Naive thymus-derived CD4-positive, alpha-beta T cell (primary cell): ENCODE measurements at regions of chr2 and their contacts with region 1.

Region 1: DNA sequence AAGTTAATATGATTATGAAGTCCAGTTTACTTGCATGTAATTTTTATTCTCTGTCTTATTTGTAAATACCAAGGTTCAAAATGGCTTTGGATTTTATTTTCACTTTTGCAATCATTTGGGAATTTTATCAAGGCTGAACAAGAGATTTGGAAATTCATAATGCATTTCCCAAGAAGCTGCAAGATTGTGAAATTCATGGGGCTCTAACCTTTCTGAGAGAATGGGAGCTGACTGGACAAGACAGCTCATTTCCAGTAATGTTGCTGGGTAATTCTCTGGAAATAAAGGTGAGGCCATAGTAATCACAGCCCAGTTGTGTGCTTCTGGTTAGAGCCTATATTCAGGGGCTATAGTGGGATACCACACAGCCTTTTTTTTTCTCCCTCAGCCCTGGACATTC is 21.5 kb upstream of the NABP1 start:
- DNase-seq: no peak
- ATAC-seq: no peak
- H3K4me3 ChIP-seq: no peak overlapping the region
- H3K4me3 Mint-ChIP-seq: no peak overlapping the region
- H3K27ac ChIP-seq: no peak overlapping the region
- H3K27ac Mint-ChIP-seq: no peak overlapping the region
- H3K4me1 ChIP-seq: no peaks in the 10 kb centered on the region
- H3K4me1 Mint-ChIP-seq: peaks cover 0 to 5% (median 0%) of the 10 kb centered on the region in 7 donors
- H3K27me3 ChIP-seq: no peaks in the 10 kb centered on the region
- H3K27me3 Mint-ChIP-seq: peaks cover 0 to 2% (median 0%) of the 10 kb centered on the region in 5 donors

Region 2: DNA sequence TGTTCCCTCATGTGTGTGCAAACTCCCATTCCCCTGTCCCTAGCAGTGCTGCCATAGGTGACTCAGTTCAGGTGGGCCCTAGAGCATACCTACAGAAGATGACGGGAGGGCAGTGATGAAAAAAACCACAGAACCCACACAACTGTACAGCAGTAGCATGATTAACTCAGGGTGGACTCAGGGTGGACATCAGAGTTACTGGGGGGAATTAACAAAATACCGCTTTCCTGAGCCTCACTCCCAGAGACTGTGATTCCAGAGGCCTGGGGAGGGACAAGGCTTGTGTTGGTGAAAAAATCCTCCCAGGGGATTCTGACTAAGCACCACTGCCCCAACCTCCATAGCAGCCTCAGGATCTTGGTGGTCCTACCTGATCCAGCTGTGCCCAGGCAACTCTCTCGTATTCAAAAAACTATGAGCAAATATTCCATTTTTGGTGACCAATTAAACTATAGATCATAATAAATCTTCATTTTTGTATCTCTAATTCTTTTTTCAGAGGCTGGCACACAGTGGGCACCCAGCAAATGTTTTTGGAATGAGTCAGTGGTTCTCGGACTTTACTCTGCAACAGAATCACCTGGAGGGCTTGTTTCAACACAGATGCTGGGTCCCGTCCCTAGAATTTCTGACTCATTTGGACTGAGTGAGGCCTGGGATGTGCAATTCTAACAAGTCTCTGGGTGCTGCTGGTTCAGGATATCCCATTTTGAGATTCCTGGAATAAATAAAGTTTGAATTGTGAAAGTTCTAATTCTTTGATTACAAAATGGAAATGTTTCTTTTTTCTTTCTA is 62.6 kb before region 1 on chr2:
- CTCF ChIA-PET with region 1: no interaction called
- POLR2A ChIA-PET with region 1: no interaction called
- intact Hi-C with region 1: no loop called
- DNase-seq: no peak
- ATAC-seq: no peak
- H3K4me3 ChIP-seq: no peak overlapping the region
- H3K4me3 Mint-ChIP-seq: no peak overlapping the region
- H3K27ac ChIP-seq: no peak overlapping the region
- H3K27ac Mint-ChIP-seq: no peak overlapping the region
- H3K4me1 ChIP-seq: no peaks in the 10 kb centered on the region
- H3K4me1 Mint-ChIP-seq: no peaks in the 10 kb centered on the region
- H3K27me3 ChIP-seq: no peaks in the 10 kb centered on the region
- H3K27me3 Mint-ChIP-seq: peaks cover 0 to 11% (median 0%) of the 10 kb centered on the region in 5 donors

Region 3: DNA sequence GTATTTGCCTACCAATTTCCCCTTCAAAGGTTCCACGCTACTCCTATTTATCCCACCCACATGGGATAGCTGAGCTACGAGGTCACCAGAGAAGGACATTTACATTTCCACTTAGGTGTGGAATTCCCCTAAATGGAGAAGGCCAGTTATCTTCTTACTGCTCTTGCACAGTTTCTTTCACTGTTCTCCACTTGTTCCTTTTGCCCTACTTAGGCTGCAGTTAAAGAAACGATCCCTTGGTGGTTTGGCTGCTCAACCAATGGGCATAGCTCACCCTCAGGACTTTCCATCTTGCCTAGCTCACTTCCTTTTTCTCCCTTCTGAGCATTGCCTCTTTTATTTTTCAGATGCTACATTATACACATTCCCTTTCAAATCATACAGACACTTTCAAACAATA is 10.3 kb after region 1 on chr2:
- CTCF ChIA-PET with region 1: no interaction called
- POLR2A ChIA-PET with region 1: interaction called, 4 read pairs
- intact Hi-C with region 1: loop called in 1 of 2 experiments (anchors 2 kb)
- DNase-seq: no peak
- ATAC-seq: peak; percentile 63
- H3K4me3 ChIP-seq: no peak overlapping the region
- H3K4me3 Mint-ChIP-seq: peak overlapping the region in 1 of 10 donors; percentile 10
- H3K27ac ChIP-seq: no peak overlapping the region
- H3K27ac Mint-ChIP-seq: no peak overlapping the region
- H3K4me1 ChIP-seq: no peaks in the 10 kb centered on the region
- H3K4me1 Mint-ChIP-seq: peaks cover 0 to 19% (median 3%) of the 10 kb centered on the region in 7 donors
- H3K27me3 ChIP-seq: no peaks in the 10 kb centered on the region
- H3K27me3 Mint-ChIP-seq: no peaks in the 10 kb centered on the region

Region 4: DNA sequence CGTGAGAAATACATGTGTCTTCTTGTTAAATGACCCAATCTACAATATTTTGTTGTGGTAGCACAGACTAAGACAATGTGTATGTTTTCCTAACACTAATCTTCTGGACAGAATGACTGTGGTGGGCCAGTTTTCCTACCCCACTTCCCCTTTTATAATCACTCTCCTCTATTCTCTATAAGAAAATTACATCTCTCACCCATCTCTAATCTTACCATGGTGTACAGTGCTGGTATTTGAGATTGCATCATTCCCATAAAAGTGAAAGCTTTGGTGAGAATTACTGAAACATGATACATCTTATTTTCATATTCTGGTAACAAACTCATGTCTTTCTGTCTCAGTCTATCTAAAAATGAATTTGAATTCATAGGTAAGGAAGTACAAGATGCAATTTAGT is 150.0 kb after region 1 on chr2:
- CTCF ChIA-PET with region 1: no interaction called
- POLR2A ChIA-PET with region 1: no interaction called
- intact Hi-C with region 1: no loop called
- DNase-seq: no peak
- ATAC-seq: no peak
- H3K4me3 ChIP-seq: no peak overlapping the region
- H3K4me3 Mint-ChIP-seq: no peak overlapping the region
- H3K27ac ChIP-seq: no peak overlapping the region
- H3K27ac Mint-ChIP-seq: no peak overlapping the region
- H3K4me1 ChIP-seq: no peaks in the 10 kb centered on the region
- H3K4me1 Mint-ChIP-seq: no peaks in the 10 kb centered on the region
- H3K27me3 ChIP-seq: no peaks in the 10 kb centered on the region
- H3K27me3 Mint-ChIP-seq: peaks cover 8 to 26% (median 19%) of the 10 kb centered on the region in 5 donors